Calu3 (cell line): ENCODE measurements at regions of chr3 and their contacts with region 1.

Region 1: DNA sequence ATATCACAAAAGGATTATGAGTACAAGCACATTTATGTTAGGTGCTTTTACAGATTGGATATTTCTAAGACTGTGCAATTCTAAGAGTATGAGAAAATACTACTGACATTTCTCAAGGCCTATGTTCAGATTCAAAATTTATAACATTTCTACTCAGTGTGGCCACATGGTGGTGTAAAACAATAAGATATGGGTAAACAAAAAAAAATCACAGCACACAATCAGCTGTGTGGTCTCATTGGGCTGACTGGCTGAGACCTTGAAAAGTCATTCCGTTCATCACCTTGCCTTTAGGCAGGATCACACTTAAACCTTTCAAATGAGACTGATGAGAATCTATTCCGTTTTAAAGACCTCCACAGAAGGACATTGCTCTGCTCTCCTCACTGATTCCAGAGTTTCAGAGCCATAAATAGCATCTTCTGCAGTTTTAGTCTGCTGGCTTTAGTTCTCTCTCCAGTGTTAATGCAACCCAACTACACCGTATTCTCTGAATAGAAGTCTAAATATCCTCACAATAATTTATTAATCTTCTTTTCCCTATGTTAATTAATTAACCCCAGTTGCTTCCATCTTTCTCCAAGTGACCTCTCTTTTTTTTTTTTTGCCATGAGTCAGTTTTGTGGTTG is 158.2 kb downstream of the SPATA16 start:
- DNase-seq: no peak
- H3K4me3 Mint-ChIP-seq: no peak overlapping the region
- H3K27ac Mint-ChIP-seq: no peak overlapping the region
- H3K4me1 Mint-ChIP-seq: no peaks in the 10 kb centered on the region
- H3K27me3 Mint-ChIP-seq: no peaks in the 10 kb centered on the region
- CTCF ChIP-seq: peak; percentile 29

Region 2: DNA sequence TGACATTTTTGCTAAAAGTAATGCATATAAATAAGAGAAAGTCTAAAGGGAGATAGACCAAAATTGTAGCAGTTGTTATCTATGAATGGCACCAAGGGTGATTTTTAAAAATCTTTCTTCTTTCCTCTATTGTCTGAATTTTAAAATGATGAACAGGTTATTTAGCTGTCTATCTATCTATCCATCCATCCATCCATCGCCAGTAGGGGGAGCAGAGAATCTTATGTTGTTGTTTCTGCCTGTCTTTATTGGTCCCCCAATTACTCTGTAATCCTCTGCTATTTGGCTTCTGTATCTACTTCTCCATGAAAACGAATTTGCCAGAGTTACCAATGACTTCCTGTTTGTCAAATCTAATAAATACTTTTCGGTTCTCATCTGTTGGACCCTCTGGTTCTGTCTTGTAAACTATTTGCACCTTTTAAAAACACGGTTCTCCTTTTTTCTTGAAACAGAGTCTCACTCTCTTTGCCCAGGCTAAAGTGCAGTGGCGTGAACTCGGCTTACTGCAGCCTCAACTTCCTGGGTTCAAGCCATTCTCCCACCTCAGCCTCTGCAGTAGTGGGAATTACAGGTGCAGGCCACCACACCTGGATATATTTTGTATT is 146.4 kb before region 1 on chr3:
- CTCF ChIA-PET with region 1: no interaction called
- intact Hi-C with region 1: loop called (anchors 1 kb)
- DNase-seq: peak; percentile 77
- H3K4me3 Mint-ChIP-seq: no peak overlapping the region
- H3K27ac Mint-ChIP-seq: no peak overlapping the region
- H3K4me1 Mint-ChIP-seq: no peaks in the 10 kb centered on the region
- H3K27me3 Mint-ChIP-seq: peaks cover 17% of the 10 kb centered on the region
- CTCF ChIP-seq: peak; percentile 84

Region 3: GRCh38 chr3:172946061-172946460 is 36.8 kb before region 1 on chr3:
- CTCF ChIA-PET with region 1: no interaction called
- intact Hi-C with region 1: no loop called
- DNase-seq: no peak
- H3K4me3 Mint-ChIP-seq: no peak overlapping the region
- H3K27ac Mint-ChIP-seq: no peak overlapping the region
- H3K4me1 Mint-ChIP-seq: no peaks in the 10 kb centered on the region
- H3K27me3 Mint-ChIP-seq: no peaks in the 10 kb centered on the region
- CTCF ChIP-seq: no peak

Region 4: DNA sequence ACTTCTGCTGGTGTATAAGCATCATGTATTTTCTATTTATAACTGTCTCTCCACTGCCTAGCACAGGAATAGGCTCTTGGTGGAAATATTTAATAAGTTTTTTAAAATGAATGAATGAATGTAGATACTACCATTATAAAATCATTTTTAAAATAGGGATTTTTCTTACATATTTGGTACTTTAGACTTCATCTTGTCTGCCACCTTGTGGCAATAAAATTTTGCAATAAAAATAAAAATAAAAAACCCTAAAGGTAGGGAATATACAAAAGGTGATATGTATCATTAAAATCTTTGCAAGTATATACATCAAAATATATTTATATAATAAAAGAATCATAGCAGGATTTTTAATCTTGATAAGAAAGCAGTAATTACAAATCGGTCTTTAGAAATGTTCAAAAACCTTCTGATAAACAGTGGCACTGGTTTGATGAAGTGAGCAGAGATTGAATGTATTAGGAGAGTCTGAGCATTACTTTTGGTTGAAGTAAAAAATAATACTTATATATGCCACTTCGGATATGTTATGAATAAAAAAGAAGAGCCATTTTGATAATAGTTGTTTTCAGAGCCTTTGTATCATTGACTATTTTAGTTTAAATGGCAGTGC is 63.0 kb after region 1 on chr3:
- CTCF ChIA-PET with region 1: no interaction called
- intact Hi-C with region 1: loop called (anchors 1 kb)
- DNase-seq: no peak
- H3K4me3 Mint-ChIP-seq: no peak overlapping the region
- H3K27ac Mint-ChIP-seq: no peak overlapping the region
- H3K4me1 Mint-ChIP-seq: no peaks in the 10 kb centered on the region
- H3K27me3 Mint-ChIP-seq: no peaks in the 10 kb centered on the region
- CTCF ChIP-seq: peak; percentile 50

Region 5: DNA sequence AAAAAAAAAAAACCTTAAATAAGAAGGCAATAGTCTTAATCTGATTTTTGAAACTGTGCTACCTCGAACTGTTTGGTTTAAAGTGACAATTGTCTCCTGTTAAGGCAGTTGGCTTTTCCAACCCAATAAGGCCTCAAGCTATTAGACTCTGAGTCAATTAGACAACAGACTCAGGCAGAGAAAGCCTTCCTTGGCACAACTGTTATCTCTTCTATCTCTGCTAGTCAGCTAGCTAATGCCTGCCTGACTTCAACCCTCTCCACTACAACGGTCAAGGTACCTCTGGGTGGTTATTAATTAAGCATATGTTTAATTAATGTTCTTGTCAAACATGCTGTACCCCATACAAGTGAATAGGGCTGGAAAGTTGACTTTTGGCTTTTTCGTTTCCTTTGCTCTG is 304.5 kb after region 1 on chr3:
- CTCF ChIA-PET with region 1: no interaction called
- intact Hi-C with region 1: loop called (anchors 10 kb)
- DNase-seq: no peak
- H3K4me3 Mint-ChIP-seq: no peak overlapping the region
- H3K27ac Mint-ChIP-seq: no peak overlapping the region
- H3K4me1 Mint-ChIP-seq: no peaks in the 10 kb centered on the region
- H3K27me3 Mint-ChIP-seq: no peaks in the 10 kb centered on the region
- CTCF ChIP-seq: no peak

Region 6: GRCh38 chr3:173395412-173396181 is 412.7 kb after region 1 on chr3:
- CTCF ChIA-PET with region 1: no interaction called
- intact Hi-C with region 1: loop called (anchors 10 kb)
- DNase-seq: peak; percentile 88
- H3K4me3 Mint-ChIP-seq: peak overlapping the region; percentile 77
- H3K27ac Mint-ChIP-seq: peak overlapping the region; percentile 95
- H3K4me1 Mint-ChIP-seq: peaks cover 23% of the 10 kb centered on the region
- H3K27me3 Mint-ChIP-seq: peaks cover 28% of the 10 kb centered on the region
- CTCF ChIP-seq: no peak

Region 7: DNA sequence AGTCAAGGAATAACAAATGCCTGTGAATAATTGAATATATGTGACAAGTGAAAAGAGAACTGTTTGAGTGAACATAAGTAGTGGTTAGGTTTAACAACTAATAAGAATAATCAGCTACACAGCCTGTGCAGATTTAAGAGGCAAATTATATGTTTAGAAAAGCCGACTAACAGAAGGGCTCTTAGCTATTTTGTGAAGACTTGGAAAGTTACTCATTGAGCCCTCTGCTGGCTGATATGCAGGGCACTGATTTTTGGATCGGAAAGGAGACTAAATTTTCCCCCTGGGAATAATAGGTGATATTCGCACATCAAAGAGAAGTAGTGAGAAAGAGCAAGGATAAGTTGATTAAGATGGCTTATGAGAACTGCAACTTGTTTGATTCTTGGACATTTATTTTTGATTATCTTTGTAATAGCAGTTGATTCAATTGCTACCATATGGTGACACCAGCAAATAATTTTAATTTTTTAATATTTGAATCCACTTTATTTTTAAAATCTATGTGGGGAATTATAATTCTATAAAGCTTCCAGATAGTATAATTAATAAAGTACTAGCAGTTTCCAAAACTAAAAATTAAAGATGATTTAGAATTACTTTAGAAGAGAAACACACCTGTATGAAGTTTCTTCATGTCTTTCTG is 570.9 kb after region 1 on chr3:
- CTCF ChIA-PET with region 1: no interaction called
- intact Hi-C with region 1: loop called (anchors 10 kb)
- DNase-seq: peak; percentile 31
- H3K4me3 Mint-ChIP-seq: no peak overlapping the region
- H3K27ac Mint-ChIP-seq: no peak overlapping the region
- H3K4me1 Mint-ChIP-seq: no peaks in the 10 kb centered on the region
- H3K27me3 Mint-ChIP-seq: no peaks in the 10 kb centered on the region
- CTCF ChIP-seq: peak; percentile 85